ENCODE measurements at regions of chr3 and their contacts with region 1.

Region 1: GRCh38 chr3:113468539-113468938 is 27.2 kb upstream of the CFAP44 start:
- DNase-seq: peak; percentile 4
- ATAC-seq: no peak
- H3K4me3 ChIP-seq: no peak overlapping the region
- H3K27ac ChIP-seq: no peak overlapping the region
- H3K4me1 ChIP-seq: no peaks in the 10 kb centered on the region
- H3K27me3 ChIP-seq: no peaks in the 10 kb centered on the region
- CTCF ChIP-seq: no peak
- POLR2A ChIP-seq: no peak
- RAD21 ChIP-seq: no peak

Region 2: GRCh38 chr3:113514265-113514769 is 45.8 kb after region 1 on chr3:
- CTCF ChIA-PET with region 1: no interaction called
- POLR2A ChIA-PET with region 1: interaction called, 13 read pairs
- dilution Hi-C with region 1: no loop called
- in situ Hi-C with region 1: no loop called
- intact Hi-C with region 1: no loop called
- DNase-seq: peak; percentile 12
- ATAC-seq: peak; percentile 19
- H3K4me3 ChIP-seq: peak overlapping the region; percentile 82
- H3K27ac ChIP-seq: peak overlapping the region; percentile 72
- H3K4me1 ChIP-seq: no peaks in the 10 kb centered on the region
- H3K27me3 ChIP-seq: no peaks in the 10 kb centered on the region; the same call in 1 of the 2 replicates
- CTCF ChIP-seq: no peak
- POLR2A ChIP-seq: no peak; the same call in 1 of the 2 replicates
- RAD21 ChIP-seq: no peak

Region 3: GRCh38 chr3:113731694-113732093 is 263.2 kb after region 1 on chr3:
- CTCF ChIA-PET with region 1: no interaction called
- POLR2A ChIA-PET with region 1: no interaction called
- dilution Hi-C with region 1: no loop called
- in situ Hi-C with region 1: no loop called
- intact Hi-C with region 1: no loop called
- DNase-seq: no peak
- ATAC-seq: no peak
- H3K4me3 ChIP-seq: no peak overlapping the region
- H3K27ac ChIP-seq: no peak overlapping the region
- H3K4me1 ChIP-seq: peaks cover 2% of the 10 kb centered on the region; the same call in 1 of the 2 replicates
- H3K27me3 ChIP-seq: no peaks in the 10 kb centered on the region
- CTCF ChIP-seq: no peak
- POLR2A ChIP-seq: no peak
- RAD21 ChIP-seq: no peak

Region 4: DNA sequence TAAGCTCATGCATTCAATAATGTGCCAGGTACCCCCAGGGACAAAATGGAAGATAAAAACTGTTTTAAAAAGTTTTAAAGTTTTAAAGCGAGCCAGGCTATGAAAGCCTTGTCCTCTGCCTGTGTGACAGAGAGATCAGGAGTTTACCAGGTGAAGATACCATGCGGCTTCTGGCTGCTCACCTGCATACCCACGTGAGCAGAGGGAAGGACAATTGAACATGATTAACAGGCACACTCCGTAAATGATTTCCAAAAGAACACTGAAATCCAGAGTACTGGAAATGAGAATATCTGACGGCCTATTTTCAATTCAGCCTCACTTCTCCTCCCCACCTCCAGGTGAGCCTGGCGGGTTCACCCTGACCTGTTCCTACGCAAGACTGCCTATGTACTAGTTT is 545.7 kb after region 1 on chr3:
- CTCF ChIA-PET with region 1: interaction called, 12 read pairs
- POLR2A ChIA-PET with region 1: no interaction called
- dilution Hi-C with region 1: no loop called
- in situ Hi-C with region 1: no loop called
- intact Hi-C with region 1: no loop called
- DNase-seq: no peak
- ATAC-seq: no peak
- H3K4me3 ChIP-seq: no peak overlapping the region
- H3K27ac ChIP-seq: no peak overlapping the region
- H3K4me1 ChIP-seq: no peaks in the 10 kb centered on the region
- H3K27me3 ChIP-seq: no peaks in the 10 kb centered on the region
- CTCF ChIP-seq: no peak
- POLR2A ChIP-seq: no peak
- RAD21 ChIP-seq: no peak